ENCODE measurements at regions of chr1 and their contacts with region 1.

Region 1: DNA sequence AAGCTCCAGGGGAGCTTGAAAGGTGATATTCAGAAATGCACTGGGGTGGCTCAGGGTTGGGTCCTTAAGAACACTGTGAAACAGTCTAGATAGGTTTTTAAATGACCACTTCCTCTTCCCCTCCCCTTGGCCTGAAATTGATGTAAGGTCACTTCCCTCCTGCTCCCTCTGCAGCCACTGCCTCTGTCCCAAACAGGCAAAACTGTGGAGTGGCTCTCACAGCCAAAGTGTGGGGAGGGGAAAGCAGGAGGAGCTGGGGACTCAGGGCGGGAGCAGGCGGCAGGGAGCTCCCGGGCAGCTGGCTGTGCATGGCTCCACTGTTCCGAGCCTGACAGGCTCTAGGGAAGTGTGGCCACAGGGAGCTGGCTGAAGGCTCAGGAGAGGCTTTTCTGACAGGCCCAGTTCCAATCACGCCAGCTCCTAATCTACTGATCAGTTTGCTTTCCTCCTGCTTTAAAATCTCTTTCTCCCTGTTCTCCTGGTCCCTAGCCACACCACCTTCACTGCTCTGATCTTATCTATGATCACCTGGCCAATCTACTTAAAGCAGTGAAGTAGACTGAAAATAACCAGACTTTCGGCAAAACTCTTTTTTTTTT is 5.1 kb upstream of the CSRP1 start:
- DNase-seq: no peak
- H3K4me3 Mint-ChIP-seq: no peak overlapping the region
- H3K27ac Mint-ChIP-seq: no peak overlapping the region
- H3K4me1 Mint-ChIP-seq: peaks cover 14% of the 10 kb centered on the region
- H3K27me3 Mint-ChIP-seq: no peaks in the 10 kb centered on the region

Region 2: GRCh38 chr1:201108614-201109013 is 403.4 kb before region 1 on chr1:
- CTCF ChIA-PET with region 1: no interaction called
- intact Hi-C with region 1: no loop called
- DNase-seq: no peak
- H3K4me3 Mint-ChIP-seq: no peak overlapping the region
- H3K27ac Mint-ChIP-seq: no peak overlapping the region
- H3K4me1 Mint-ChIP-seq: no peaks in the 10 kb centered on the region
- H3K27me3 Mint-ChIP-seq: no peaks in the 10 kb centered on the region

Region 3: DNA sequence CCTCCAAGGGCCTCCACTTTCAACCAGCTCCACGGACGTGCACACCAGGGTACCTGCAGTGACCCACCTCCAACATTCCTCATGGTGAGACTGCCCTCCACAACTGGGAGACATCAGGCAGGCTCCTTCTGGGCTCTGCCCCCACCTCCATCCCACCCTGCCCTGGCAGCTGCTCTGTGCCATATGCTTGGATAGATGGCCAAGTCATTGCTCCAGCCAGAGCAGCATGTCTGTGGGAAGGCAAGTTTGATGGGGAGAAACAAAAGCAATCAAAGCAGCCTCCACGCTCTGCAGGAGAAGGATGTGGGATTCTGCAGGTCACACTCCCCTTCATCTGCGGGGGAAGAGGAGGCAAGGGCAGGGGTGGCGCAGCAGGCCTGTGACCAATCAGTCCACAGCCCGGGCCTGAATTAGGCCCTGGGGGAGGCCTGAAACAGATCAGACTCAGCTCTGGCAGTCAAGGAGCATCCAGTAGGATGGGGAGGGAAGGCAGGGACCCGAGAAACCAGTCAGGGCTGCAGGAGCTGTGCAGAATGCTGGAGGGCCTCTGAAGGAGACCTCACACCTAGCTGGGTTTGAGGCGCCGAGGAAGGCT is 147.4 kb before region 1 on chr1:
- CTCF ChIA-PET with region 1: no interaction called
- intact Hi-C with region 1: no loop called
- DNase-seq: no peak
- H3K4me3 Mint-ChIP-seq: no peak overlapping the region
- H3K27ac Mint-ChIP-seq: no peak overlapping the region
- H3K4me1 Mint-ChIP-seq: no peaks in the 10 kb centered on the region
- H3K27me3 Mint-ChIP-seq: peaks cover 10% of the 10 kb centered on the region

Region 4: GRCh38 chr1:201436393-201436792 is 75.6 kb before region 1 on chr1:
- CTCF ChIA-PET with region 1: interaction called, 33 read pairs
- intact Hi-C with region 1: loop called (anchors 1 kb)
- DNase-seq: no peak
- H3K4me3 Mint-ChIP-seq: no peak overlapping the region
- H3K27ac Mint-ChIP-seq: no peak overlapping the region
- H3K4me1 Mint-ChIP-seq: peaks cover 5% of the 10 kb centered on the region
- H3K27me3 Mint-ChIP-seq: peaks cover 6% of the 10 kb centered on the region

Region 5: GRCh38 chr1:201488817-201489589 is 23.0 kb before region 1 on chr1:
- CTCF ChIA-PET with region 1: interaction called, 287 read pairs
- intact Hi-C with region 1: no loop called
- DNase-seq: no peak
- H3K4me3 Mint-ChIP-seq: no peak overlapping the region
- H3K27ac Mint-ChIP-seq: no peak overlapping the region
- H3K4me1 Mint-ChIP-seq: no peaks in the 10 kb centered on the region
- H3K27me3 Mint-ChIP-seq: no peaks in the 10 kb centered on the region

Region 6: DNA sequence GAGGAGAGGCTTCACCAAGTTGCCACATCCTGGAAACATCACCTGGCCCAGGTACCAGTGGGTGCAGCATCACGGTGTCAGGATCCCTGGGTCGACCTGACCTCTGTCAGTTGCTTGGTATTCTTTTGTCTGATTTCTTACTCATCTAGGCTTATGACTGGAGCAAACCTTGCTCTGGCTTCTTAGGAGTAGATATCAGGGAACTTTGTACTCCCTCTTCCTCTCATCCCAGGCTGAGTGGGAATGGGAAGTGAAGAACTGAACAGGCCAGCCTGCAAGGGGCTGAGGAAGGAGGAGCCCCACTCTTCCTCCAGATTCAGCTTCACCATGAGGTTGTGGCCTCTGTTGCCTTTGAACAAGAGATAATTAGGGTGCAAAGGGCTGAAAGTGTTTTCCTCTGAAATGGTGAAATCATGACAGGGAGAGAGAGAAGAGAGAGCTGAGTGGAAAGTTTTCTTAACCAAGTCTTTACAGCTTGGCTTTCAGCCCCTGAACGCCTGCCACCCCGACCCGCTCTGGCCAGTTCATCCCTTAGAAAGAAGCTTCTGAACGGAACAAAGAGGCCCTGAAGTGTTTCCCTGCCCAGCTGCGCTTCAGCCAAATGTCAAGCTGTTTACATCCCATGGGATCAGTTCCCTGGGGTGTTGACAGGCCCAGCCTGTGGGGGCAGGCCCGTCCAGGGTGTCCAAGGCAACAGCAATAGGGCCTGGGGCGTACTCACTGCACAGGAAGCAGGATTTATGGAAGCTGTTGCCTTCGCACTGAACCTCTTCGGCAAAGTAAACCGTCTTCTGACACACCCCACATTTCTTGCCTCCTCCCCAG is 16.4 kb before region 1 on chr1:
- CTCF ChIA-PET with region 1: interaction called, 69 read pairs
- intact Hi-C with region 1: no loop called
- DNase-seq: no peak
- H3K4me3 Mint-ChIP-seq: no peak overlapping the region
- H3K27ac Mint-ChIP-seq: no peak overlapping the region
- H3K4me1 Mint-ChIP-seq: no peaks in the 10 kb centered on the region
- H3K27me3 Mint-ChIP-seq: no peaks in the 10 kb centered on the region

Region 7: DNA sequence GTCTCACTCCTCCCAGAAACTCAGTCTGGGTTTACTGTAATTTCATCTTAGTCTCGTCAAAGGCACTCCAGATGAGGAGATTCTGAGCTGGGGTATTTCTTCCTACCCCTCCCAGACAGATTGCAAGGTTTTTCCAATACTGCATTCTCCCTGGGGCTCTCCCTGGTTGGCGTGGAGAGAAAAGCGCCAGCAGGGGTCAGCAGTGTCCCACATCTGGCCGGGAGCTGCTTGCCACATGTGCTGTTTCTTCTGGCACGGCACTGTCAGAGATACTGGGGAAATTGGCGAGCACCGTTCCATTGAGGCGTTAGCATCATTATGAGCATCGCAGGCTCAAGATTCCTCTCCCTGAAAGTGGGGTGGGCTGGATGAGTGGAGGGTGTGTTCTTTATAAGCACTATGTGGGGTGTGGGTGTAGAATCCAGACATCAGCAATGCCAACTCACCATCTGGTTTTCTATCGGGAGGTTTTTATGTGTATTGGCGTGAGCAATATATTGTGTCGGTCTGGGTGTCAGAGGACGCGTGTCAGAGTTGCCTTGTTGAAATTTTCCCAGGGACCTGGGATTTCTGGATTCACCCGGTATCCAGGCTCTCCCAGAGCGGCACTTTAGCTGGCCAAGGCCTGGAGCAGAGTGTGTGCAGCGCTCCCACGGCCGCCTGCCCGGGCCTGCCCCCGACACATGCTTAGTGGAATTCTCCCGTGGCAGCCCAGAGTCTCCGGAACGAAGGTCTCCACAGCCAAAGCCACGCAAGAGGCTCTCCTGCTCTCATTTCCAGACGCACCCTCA is 18.9 kb after region 1 on chr1:
- CTCF ChIA-PET with region 1: interaction called, 19 read pairs
- intact Hi-C with region 1: no loop called
- DNase-seq: peak; percentile 77
- H3K4me3 Mint-ChIP-seq: no peak overlapping the region
- H3K27ac Mint-ChIP-seq: no peak overlapping the region
- H3K4me1 Mint-ChIP-seq: peaks cover 10% of the 10 kb centered on the region
- H3K27me3 Mint-ChIP-seq: no peaks in the 10 kb centered on the region

Measured in activated naive CD4-positive, alpha-beta T cell treated with anti-CD3 and anti-CD28 coated beads for 36 hours (primary cell).